IMR-90 (cell line): ENCODE measurements at regions of chr16 and their contacts with region 1.

Region 1: DNA sequence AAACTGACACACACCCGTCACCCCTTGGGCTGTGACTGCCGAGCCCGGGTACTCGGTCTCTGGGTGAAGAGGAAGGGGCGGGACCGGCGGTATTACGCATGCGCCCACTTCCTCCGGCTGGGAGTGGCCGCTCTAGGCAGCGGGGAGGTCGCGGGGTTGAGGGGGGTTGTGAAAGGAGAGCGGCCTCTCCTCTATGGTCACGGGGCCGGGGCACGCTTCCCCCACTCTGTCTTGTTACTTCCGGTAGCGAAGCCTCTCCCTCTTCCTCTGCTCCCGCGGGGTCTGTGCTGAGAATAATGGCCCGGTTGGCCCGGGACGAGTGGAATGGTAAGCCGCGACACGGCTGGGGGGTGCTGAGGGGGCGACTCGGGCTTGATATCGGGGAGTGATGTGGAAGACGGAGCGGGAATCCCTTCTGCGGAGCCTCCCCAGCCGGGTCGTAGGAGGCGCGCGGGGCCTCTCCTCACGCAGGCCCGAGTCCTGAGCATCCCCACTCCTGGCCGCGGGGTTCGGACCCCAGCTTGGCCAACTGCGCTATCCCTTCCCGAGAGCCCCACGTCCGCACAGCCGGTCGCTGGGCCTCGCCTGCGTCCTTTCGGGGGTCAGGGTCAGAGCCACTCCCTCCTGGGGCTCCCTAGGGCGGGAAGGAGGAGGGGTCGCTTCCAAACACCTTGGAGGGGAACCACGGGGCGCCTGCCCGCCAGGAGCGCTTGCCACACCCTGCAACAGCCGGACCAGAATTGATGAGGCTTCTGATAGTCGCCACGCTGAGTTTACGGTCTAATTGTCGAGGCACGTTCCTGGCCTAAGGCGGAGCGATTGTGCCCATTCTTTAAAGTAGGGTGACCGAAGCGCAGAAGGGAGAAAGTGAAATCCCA is at the start of gene BFAR:
- DNase-seq: peak; percentile 93
- ATAC-seq: peak; percentile 78
- H3K4me3 ChIP-seq: peak within 1 kb of the TSS; percentile 79
- H3K27ac ChIP-seq: peak within 1 kb of the TSS; percentile 86
- H3K4me1 ChIP-seq: peaks cover 6% of the 10 kb centered on the region
- H3K27me3 ChIP-seq: no peaks in the 10 kb centered on the region
- CTCF ChIP-seq: no peak
- POLR2A ChIP-seq: peak; percentile 99
- RAD21 ChIP-seq: no peak
- total RNA-seq, gene BFAR: 51.7 and 56.5 TPM in 2 replicates

Region 2: DNA sequence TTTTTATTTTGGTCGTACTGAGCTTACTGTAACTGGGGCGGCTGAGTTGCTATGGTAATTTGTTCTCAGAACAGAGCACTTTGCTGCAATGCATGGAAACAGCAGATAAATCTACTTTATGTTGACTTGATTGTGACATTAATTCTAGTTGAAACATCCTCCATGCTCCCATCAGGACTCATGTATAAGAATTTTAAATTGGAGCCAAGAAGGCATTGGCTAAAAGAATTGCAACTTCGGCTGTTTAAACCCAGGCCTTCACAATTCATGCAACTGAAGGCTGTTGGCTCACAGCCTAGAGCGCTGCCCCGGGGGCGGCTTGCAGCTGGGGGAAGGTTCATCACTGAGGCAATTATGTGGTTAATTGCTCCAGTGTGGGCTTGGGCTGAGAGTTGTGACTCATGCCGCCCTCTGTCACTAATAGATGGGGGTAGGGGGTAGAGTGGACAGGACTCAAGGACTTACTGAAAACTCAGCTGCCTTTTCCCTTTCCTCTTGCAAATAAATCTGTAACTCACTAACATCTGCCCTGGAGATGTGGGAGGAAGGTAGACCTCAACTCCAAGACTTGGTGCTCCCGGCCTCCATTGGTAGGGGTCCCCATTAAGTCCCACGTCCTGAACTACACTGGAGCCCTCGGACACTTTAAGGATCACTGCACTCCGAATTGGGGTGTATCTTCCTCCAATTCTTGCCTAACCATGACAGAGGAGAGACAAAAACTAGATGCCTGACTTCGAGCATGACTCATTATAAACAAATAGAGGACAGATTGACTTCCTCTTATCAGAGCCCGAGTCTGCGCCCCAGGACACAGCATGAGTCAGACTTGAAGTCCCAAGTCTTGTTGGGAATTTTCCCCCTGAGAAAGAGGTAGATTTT is 675.5 kb before region 1 on chr16:
- CTCF ChIA-PET with region 1: no interaction called
- POLR2A ChIA-PET with region 1: no interaction called
- dilution Hi-C with region 1: no loop called
- in situ Hi-C with region 1: no loop called
- intact Hi-C with region 1: no loop called
- DNase-seq: peak; percentile 95
- ATAC-seq: peak; percentile 89
- H3K4me3 ChIP-seq: peak overlapping the region; percentile 32; the same call in 1 of the 2 replicates
- H3K27ac ChIP-seq: peak overlapping the region; percentile 94
- H3K4me1 ChIP-seq: peaks cover 5% of the 10 kb centered on the region
- H3K27me3 ChIP-seq: no peaks in the 10 kb centered on the region
- CTCF ChIP-seq: no peak
- POLR2A ChIP-seq: no peak
- RAD21 ChIP-seq: no peak

Region 3: GRCh38 chr16:14389359-14389758 is 243.6 kb before region 1 on chr16:
- CTCF ChIA-PET with region 1: no interaction called
- POLR2A ChIA-PET with region 1: no interaction called
- dilution Hi-C with region 1: no loop called
- in situ Hi-C with region 1: no loop called
- intact Hi-C with region 1: no loop called
- DNase-seq: no peak
- ATAC-seq: no peak
- H3K4me3 ChIP-seq: no peak overlapping the region
- H3K27ac ChIP-seq: no peak overlapping the region
- H3K4me1 ChIP-seq: no peaks in the 10 kb centered on the region
- H3K27me3 ChIP-seq: no peaks in the 10 kb centered on the region
- CTCF ChIP-seq: no peak
- POLR2A ChIP-seq: no peak
- RAD21 ChIP-seq: no peak

Region 4: DNA sequence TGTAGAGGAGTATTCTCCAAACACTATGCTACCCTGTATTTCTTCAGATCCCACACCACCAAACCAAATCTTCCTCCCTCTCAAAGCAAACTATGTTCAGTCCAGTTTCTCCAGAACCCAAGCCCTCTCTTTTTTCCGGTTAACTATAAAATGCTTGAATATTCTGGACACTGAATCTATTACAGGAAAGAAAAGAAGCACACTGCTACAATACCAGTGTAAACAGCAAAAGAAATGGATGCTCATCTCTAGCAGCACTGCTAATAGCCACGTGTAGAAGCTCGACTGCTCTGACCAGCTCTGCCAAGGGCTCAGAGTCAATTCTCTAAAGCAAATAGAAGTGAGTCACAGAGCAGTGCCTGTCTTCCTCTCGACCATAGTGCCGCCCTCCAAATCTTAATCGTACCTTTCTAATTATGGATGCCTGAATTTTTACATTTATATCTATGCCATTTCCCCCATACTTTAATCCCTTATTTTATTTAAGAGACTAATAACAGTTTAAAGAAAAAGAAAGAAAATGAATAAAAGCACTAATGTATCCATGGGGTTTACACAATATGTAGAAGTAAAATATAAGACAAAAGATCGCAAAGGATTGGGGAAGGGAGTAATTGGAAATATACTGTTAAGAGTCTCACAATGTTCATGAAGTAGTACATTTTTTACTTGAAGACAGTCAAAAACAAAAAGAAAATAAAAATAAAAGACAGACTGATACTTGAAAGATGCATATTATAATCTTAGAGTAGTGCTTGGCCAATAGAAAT is 157.4 kb before region 1 on chr16:
- CTCF ChIA-PET with region 1: no interaction called
- POLR2A ChIA-PET with region 1: no interaction called
- dilution Hi-C with region 1: no loop called
- in situ Hi-C with region 1: no loop called
- intact Hi-C with region 1: no loop called
- DNase-seq: peak; percentile 24
- ATAC-seq: no peak
- H3K4me3 ChIP-seq: no peak overlapping the region
- H3K27ac ChIP-seq: no peak overlapping the region
- H3K4me1 ChIP-seq: no peaks in the 10 kb centered on the region
- H3K27me3 ChIP-seq: no peaks in the 10 kb centered on the region
- CTCF ChIP-seq: no peak
- POLR2A ChIP-seq: no peak
- RAD21 ChIP-seq: no peak

Region 5: GRCh38 chr16:14650629-14651028 is 17.7 kb after region 1 on chr16:
- CTCF ChIA-PET with region 1: no interaction called
- POLR2A ChIA-PET with region 1: no interaction called
- dilution Hi-C with region 1: no loop called
- in situ Hi-C with region 1: no loop called
- intact Hi-C with region 1: no loop called
- DNase-seq: no peak
- ATAC-seq: no peak; the same call in 1 of the 2 replicates
- H3K4me3 ChIP-seq: no peak overlapping the region
- H3K27ac ChIP-seq: no peak overlapping the region
- H3K4me1 ChIP-seq: no peaks in the 10 kb centered on the region
- H3K27me3 ChIP-seq: no peaks in the 10 kb centered on the region
- CTCF ChIP-seq: no peak
- POLR2A ChIP-seq: no peak
- RAD21 ChIP-seq: no peak

Region 6: DNA sequence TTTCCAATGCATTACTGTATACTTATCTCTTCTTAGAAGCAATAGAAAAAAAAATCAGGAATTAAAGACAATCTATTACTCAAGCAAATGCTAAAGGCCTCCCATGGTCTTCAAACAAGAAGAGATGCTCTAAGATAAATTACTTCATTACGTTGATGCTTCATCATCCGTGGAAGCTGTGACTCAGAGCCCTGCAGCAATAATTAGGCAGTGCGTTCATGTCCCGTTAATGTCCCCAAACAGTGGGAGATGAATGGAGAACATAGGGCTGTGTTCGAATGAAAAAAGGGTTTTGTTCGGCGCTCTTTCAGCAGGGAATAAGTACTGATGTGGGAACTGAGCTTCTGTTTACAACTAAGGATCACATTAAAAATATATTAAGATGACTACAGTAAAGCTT is 326.0 kb after region 1 on chr16:
- CTCF ChIA-PET with region 1: no interaction called
- POLR2A ChIA-PET with region 1: no interaction called
- dilution Hi-C with region 1: no loop called
- in situ Hi-C with region 1: loop called (anchors 25 kb)
- intact Hi-C with region 1: no loop called
- DNase-seq: no peak
- ATAC-seq: no peak
- H3K4me3 ChIP-seq: no peak overlapping the region
- H3K27ac ChIP-seq: no peak overlapping the region
- H3K4me1 ChIP-seq: no peaks in the 10 kb centered on the region
- H3K27me3 ChIP-seq: peaks cover 26% of the 10 kb centered on the region
- CTCF ChIP-seq: no peak
- POLR2A ChIP-seq: no peak
- RAD21 ChIP-seq: no peak